ENCODE measurements at regions of chr13 and their contacts with region 1.

Region 1: GRCh38 chr13:79212064-79212619 is 193.9 kb downstream of the RBM26 start:
- DNase-seq: no peak
- H3K4me3 ChIP-seq: no peak overlapping the region
- H3K27ac ChIP-seq: no peak overlapping the region
- H3K4me1 ChIP-seq: no peaks in the 10 kb centered on the region
- H3K27me3 ChIP-seq: no peaks in the 10 kb centered on the region
- CTCF ChIP-seq: no peak

Region 2: GRCh38 chr13:79287939-79288795 is 76.0 kb after region 1 on chr13:
- CTCF ChIA-PET with region 1: no interaction called
- dilution Hi-C with region 1: loop called (anchors 5 kb)
- in situ Hi-C with region 1: no loop called
- intact Hi-C with region 1: no loop called
- DNase-seq: no peak
- H3K4me3 ChIP-seq: no peak overlapping the region
- H3K27ac ChIP-seq: no peak overlapping the region
- H3K4me1 ChIP-seq: no peaks in the 10 kb centered on the region
- H3K27me3 ChIP-seq: no peaks in the 10 kb centered on the region
- CTCF ChIP-seq: no peak